Dendritic cell treated with granulocyte-macrophage colony-stimulating factor and Interleukin-4, amounts not matched to agents 40 ng/mL and 50 ng/mL, for 4 days (primary cell): ENCODE measurements at regions of chrX and their contacts with region 1.

Region 1: DNA sequence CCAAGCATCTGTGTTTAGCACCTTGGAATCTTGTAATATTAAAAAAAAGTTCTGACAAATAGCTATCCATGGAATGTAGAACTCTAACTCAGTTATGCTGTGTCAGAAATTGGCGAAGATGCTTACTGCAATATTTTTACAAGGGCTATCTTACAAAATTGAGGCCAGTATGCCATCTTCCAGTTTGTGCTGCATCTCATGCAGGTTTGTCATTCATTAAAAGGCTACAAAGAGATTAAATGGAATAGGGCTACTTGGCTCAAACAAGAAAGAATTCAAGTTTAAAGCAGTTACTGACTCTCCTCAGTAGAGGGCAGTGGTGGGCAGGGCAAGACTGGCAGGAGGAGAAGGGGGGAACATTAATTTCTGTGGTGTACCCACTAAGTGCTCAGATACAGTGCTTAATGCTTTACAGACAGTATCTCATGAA is 66.5 kb downstream of the SHROOM4 start:
- H3K4me3 Mint-ChIP-seq: no peak overlapping the region
- H3K27ac Mint-ChIP-seq: no peak overlapping the region
- H3K4me1 Mint-ChIP-seq: peaks cover under 1% of the 10 kb centered on the region
- H3K27me3 Mint-ChIP-seq: no peaks in the 10 kb centered on the region

Region 2: GRCh38 chrX:50779694-50780093 is 32.2 kb after region 1 on chrX:
- intact Hi-C with region 1: no loop called
- H3K4me3 Mint-ChIP-seq: no peak overlapping the region
- H3K27ac Mint-ChIP-seq: no peak overlapping the region
- H3K4me1 Mint-ChIP-seq: no peaks in the 10 kb centered on the region
- H3K27me3 Mint-ChIP-seq: no peaks in the 10 kb centered on the region

Region 3: GRCh38 chrX:50838820-50839600 is 91.5 kb after region 1 on chrX:
- intact Hi-C with region 1: no loop called
- H3K4me3 Mint-ChIP-seq: no peak overlapping the region
- H3K27ac Mint-ChIP-seq: no peak overlapping the region
- H3K4me1 Mint-ChIP-seq: no peaks in the 10 kb centered on the region
- H3K27me3 Mint-ChIP-seq: no peaks in the 10 kb centered on the region

Region 4: DNA sequence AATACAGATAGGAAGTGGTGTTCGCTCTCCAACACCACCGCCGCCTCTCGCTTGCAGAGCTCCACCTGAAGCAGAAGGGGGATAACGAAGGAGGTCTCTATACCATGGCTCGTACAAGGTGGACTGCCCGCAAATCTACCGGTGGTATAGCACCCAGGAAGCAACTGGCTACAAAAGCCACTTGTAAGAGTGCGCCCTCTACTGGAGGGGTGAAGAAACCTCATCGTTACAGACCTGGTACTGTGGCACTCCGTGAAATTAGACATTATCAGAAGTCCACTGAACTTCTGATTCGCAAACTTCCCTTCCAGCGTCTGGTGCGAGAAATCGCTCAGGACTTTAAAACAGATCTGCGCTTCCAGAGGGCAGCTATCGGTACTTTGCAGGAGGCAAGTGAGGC is 157.8 kb after region 1 on chrX:
- intact Hi-C with region 1: loop called (anchors 5 kb)
- H3K4me3 Mint-ChIP-seq: no peak overlapping the region
- H3K27ac Mint-ChIP-seq: no peak overlapping the region
- H3K4me1 Mint-ChIP-seq: no peaks in the 10 kb centered on the region
- H3K27me3 Mint-ChIP-seq: no peaks in the 10 kb centered on the region